Activated CD4-positive, alpha-beta memory T cell treated with anti-CD3 and anti-CD28 coated beads for 36 hours (primary cell): ENCODE measurements at regions of chr1 and their contacts with region 1.

Region 1: DNA sequence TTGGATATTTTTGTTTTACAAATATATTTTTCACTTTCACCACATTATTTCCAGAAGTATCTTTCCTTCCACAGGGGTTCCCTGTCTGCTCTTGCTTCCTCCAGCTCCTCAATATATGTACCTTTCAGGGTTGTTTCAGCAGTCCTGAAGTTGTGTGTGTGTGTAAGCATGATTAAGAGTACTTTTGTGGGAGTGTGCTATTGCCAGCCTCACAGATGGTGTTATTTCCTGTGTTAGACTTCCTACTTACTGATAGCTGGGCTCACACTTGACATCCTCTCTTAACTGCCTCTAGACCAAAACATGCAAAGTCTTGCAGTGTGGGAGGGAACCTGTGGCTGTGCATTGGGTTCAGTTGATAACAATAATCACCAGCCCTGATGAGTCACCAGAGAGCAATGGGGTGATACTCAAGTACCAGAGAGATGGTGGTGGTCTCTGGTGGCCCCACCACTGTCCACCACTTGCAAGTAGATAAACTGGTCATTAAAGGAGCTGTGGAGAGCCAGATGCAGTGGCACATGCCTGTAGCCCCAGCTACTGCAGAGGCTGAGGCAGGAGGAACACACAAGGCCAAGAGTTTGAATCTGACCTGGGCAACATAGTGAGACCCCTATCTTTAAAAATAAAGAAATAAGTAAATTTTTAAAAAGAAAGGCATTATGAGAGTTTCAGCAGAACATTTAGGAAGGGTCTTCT is 126.7 kb downstream of the NR5A2 start:
- DNase-seq: peak; percentile 70
- H3K4me3 Mint-ChIP-seq: no peak overlapping the region
- H3K27ac Mint-ChIP-seq: peak overlapping the region; percentile 86
- H3K4me1 Mint-ChIP-seq: peaks cover 40% of the 10 kb centered on the region
- H3K27me3 Mint-ChIP-seq: no peaks in the 10 kb centered on the region

Region 2: DNA sequence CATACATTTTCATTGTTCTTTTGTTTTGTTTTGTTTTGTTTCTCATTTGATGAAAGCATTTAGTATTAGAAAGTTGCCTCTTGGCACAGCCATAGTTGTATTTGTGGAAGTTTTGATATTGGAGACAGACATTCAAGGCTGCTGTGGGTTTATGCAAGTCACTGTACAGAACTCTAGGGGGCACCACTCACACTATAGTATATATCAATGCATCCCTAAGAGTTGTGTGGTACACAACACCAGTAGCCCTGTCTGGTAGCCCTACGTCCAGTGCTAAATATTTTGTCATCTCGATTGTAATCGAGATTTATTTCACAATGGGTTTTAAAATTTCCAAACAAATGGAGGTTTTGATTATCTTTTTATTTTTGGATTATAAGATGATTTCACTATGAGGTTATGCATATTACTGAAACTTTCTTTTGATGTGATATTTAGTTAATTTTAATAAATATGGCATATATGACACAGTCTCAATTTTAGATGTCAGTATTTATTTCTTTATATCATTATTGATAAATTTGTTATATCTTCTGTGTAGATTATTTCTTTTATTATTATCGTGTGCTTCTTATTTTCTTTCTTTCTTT is 14.5 kb before region 1 on chr1:
- CTCF ChIA-PET with region 1: interaction called, 12 read pairs
- POLR2A ChIA-PET with region 1: no interaction called
- intact Hi-C with region 1: no loop called
- DNase-seq: peak; percentile 27
- H3K4me3 Mint-ChIP-seq: no peak overlapping the region
- H3K27ac Mint-ChIP-seq: no peak overlapping the region
- H3K4me1 Mint-ChIP-seq: no peaks in the 10 kb centered on the region
- H3K27me3 Mint-ChIP-seq: no peaks in the 10 kb centered on the region

Region 3: GRCh38 chr1:200226268-200226968 is 72.2 kb after region 1 on chr1:
- CTCF ChIA-PET with region 1: no interaction called
- POLR2A ChIA-PET with region 1: no interaction called
- intact Hi-C with region 1: loop called (anchors 1 kb)
- DNase-seq: peak; percentile 61
- H3K4me3 Mint-ChIP-seq: no peak overlapping the region
- H3K27ac Mint-ChIP-seq: peak overlapping the region; percentile 35
- H3K4me1 Mint-ChIP-seq: peaks cover 22% of the 10 kb centered on the region
- H3K27me3 Mint-ChIP-seq: peaks cover 2% of the 10 kb centered on the region

Region 4: GRCh38 chr1:200302192-200302920 is 148.1 kb after region 1 on chr1:
- CTCF ChIA-PET with region 1: interaction called, 4 read pairs
- POLR2A ChIA-PET with region 1: no interaction called
- intact Hi-C with region 1: loop called (anchors 5 kb)
- DNase-seq: peak; percentile 67
- H3K4me3 Mint-ChIP-seq: peak overlapping the region; percentile 76
- H3K27ac Mint-ChIP-seq: no peak overlapping the region
- H3K4me1 Mint-ChIP-seq: peaks cover 14% of the 10 kb centered on the region
- H3K27me3 Mint-ChIP-seq: peaks cover 5% of the 10 kb centered on the region

Region 5: GRCh38 chr1:200336111-200336845 is 182.1 kb after region 1 on chr1:
- CTCF ChIA-PET with region 1: no interaction called
- POLR2A ChIA-PET with region 1: no interaction called
- intact Hi-C with region 1: no loop called
- DNase-seq: no peak
- H3K4me3 Mint-ChIP-seq: no peak overlapping the region
- H3K27ac Mint-ChIP-seq: no peak overlapping the region
- H3K4me1 Mint-ChIP-seq: peaks cover 13% of the 10 kb centered on the region
- H3K27me3 Mint-ChIP-seq: no peaks in the 10 kb centered on the region

Region 6: GRCh38 chr1:200409761-200410565 is 255.7 kb after region 1 on chr1 and contains the start of gene ZNF281:
- CTCF ChIA-PET with region 1: no interaction called
- POLR2A ChIA-PET with region 1: no interaction called
- intact Hi-C with region 1: loop called (anchors 5 kb)
- DNase-seq: peak; percentile 97
- H3K4me3 Mint-ChIP-seq: peak within 1 kb of the TSS; percentile 87
- H3K27ac Mint-ChIP-seq: peak within 1 kb of the TSS; percentile 88
- H3K4me1 Mint-ChIP-seq: peaks cover 49% of the 10 kb centered on the region
- H3K27me3 Mint-ChIP-seq: no peaks in the 10 kb centered on the region
- total RNA-seq, gene ZNF281: 11.0 to 11.2 TPM

Region 7: GRCh38 chr1:200473698-200474371 is 319.6 kb after region 1 on chr1:
- CTCF ChIA-PET with region 1: no interaction called
- POLR2A ChIA-PET with region 1: no interaction called
- intact Hi-C with region 1: loop called (anchors 2 kb)
- DNase-seq: peak; percentile 69
- H3K4me3 Mint-ChIP-seq: peak overlapping the region; percentile 41
- H3K27ac Mint-ChIP-seq: peak overlapping the region; percentile 65
- H3K4me1 Mint-ChIP-seq: peaks cover 42% of the 10 kb centered on the region
- H3K27me3 Mint-ChIP-seq: peaks cover 13% of the 10 kb centered on the region

Region 8: GRCh38 chr1:201023517-201023902 is 869.3 kb after region 1 on chr1 and contains the start of gene KIF21B:
- CTCF ChIA-PET with region 1: no interaction called
- POLR2A ChIA-PET with region 1: no interaction called
- intact Hi-C with region 1: loop called (anchors 5 kb)
- DNase-seq: peak; percentile 93
- H3K4me3 Mint-ChIP-seq: peak within 1 kb of the TSS; percentile 98
- H3K27ac Mint-ChIP-seq: peak within 1 kb of the TSS; percentile 99
- H3K4me1 Mint-ChIP-seq: peaks cover 81% of the 10 kb centered on the region
- H3K27me3 Mint-ChIP-seq: no peaks in the 10 kb centered on the region
- total RNA-seq, gene KIF21B: 56.6 to 58.7 TPM